ENCODE measurements at regions of chr16 and their contacts with region 1.

Region 1: GRCh38 chr16:13206606-13207005 is 305.2 kb downstream of the SHISA9 start:
- DNase-seq: no peak
- H3K4me3 ChIP-seq: no peak overlapping the region
- H3K27ac ChIP-seq: no peak overlapping the region
- H3K4me1 ChIP-seq: no peaks in the 10 kb centered on the region
- CTCF ChIP-seq: no peak

Region 2: GRCh38 chr16:13193721-13194120 is 12.9 kb before region 1 on chr16:
- CTCF ChIA-PET with region 1: no interaction called
- POLR2A ChIA-PET with region 1: no interaction called
- intact Hi-C with region 1: no loop called
- DNase-seq: no peak
- H3K4me3 ChIP-seq: no peak overlapping the region
- H3K27ac ChIP-seq: no peak overlapping the region
- H3K4me1 ChIP-seq: no peaks in the 10 kb centered on the region
- CTCF ChIP-seq: no peak

Region 3: DNA sequence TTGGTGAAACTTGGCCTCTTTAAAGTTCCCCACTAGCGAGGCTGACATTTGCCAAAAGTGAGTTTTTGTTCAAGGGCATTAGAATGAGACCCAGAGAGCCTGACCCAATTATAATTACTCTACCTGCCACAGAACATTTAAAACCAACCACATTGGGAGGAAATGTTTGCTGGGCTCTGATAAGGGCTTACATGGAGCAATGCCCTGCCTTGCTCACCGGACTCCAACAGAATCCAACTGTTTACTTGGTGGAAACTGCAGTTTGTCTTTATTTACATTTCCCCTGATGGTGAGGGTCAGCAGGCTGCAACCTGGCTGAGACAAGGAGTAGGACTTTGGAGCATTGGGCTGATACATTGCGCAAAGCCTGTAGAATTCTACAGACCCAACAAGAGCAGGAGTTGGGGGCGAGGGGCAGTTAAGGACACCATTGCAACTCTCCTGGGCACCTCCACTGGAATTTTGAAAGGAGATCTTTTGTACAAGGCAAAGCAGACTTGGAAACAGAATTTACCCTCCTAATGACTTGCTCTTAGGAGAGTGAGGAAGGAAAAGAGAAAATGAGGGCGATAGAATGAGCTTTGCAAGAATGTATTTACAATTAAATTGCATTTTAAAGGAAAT is 63.4 kb after region 1 on chr16:
- CTCF ChIA-PET with region 1: no interaction called
- POLR2A ChIA-PET with region 1: no interaction called
- intact Hi-C with region 1: loop called (anchors 10 kb)
- DNase-seq: no peak
- H3K4me3 ChIP-seq: no peak overlapping the region
- H3K27ac ChIP-seq: no peak overlapping the region
- H3K4me1 ChIP-seq: no peaks in the 10 kb centered on the region
- CTCF ChIP-seq: no peak